Activated naive CD4-positive, alpha-beta T cell treated with anti-CD3 and anti-CD28 coated beads for 36 hours (primary cell): ENCODE measurements at regions of chr11 and their contacts with region 1.

Region 1: GRCh38 chr11:126282736-126283591 is at the start of gene TIRAP:
- DNase-seq: peak; percentile 70
- H3K4me3 Mint-ChIP-seq: peak within 1 kb of the TSS; percentile 95
- H3K27ac Mint-ChIP-seq: peak within 1 kb of the TSS; percentile 93
- H3K4me1 Mint-ChIP-seq: peaks cover 49% of the 10 kb centered on the region
- H3K27me3 Mint-ChIP-seq: no peaks in the 10 kb centered on the region
- total RNA-seq, gene TIRAP: 2.7 to 3.5 TPM

Region 2: GRCh38 chr11:126062679-126063506 is 220.1 kb before region 1 on chr11 and contains the start of gene CDON:
- CTCF ChIA-PET with region 1: no interaction called
- intact Hi-C with region 1: loop called (anchors 1 kb)
- DNase-seq: peak; percentile 92
- H3K4me3 Mint-ChIP-seq: peak within 1 kb of the TSS; percentile 77
- H3K27ac Mint-ChIP-seq: peak within 1 kb of the TSS; percentile 92
- H3K4me1 Mint-ChIP-seq: peaks cover 5% of the 10 kb centered on the region
- H3K27me3 Mint-ChIP-seq: peaks cover 17% of the 10 kb centered on the region
- total RNA-seq, gene CDON: 2.6 to 3.5 TPM

Region 3: GRCh38 chr11:126303623-126304456 is 20.9 kb after region 1 on chr11 and contains the start of gene DCPS:
- CTCF ChIA-PET with region 1: interaction called, 4 read pairs
- intact Hi-C with region 1: loop called (anchors 1 kb)
- DNase-seq: peak; percentile 86
- H3K4me3 Mint-ChIP-seq: peak within 1 kb of the TSS; percentile 95
- H3K27ac Mint-ChIP-seq: peak within 1 kb of the TSS; percentile 97
- H3K4me1 Mint-ChIP-seq: peaks cover 35% of the 10 kb centered on the region
- H3K27me3 Mint-ChIP-seq: no peaks in the 10 kb centered on the region
- total RNA-seq, gene DCPS: 34.9 to 39.5 TPM

Region 4: DNA sequence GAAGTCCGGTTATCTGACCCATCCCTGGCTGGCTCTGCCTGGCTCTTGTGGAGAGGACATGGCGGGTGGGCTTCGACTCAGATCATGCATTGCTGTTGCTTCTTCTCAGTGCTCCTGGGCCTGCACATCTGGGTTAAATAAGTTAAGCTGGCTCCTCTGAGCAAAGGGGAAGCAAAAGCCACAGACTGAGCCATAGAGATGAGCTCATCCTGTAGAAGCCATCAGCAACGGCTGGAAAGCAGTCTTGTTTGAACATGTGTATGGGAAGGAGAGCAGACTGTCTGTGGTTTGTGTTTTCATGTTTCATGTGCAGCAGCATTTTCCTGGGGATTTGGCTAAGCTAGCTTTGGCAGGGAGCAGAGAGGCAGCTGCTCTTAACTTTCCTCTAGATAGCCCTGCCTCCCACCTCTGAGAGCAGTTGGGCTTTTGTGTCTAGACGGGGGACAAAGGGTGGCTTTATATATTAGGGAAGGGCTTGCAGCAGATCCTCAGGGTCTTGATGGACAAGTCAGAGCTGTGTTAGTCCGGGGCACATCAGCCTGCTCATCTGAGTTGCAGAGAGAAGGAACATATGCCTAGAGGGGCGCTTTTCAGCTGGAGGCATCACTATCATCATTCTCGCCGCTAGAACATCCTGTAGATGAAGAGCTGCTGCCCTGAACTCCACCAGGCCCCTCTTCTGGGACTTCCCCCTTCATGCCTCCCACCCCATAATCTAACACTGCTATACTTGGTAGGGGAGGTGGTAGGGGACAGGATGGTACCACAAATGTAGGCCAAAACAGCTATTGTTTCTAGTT is 35.8 kb after region 1 on chr11:
- CTCF ChIA-PET with region 1: no interaction called
- intact Hi-C with region 1: loop called (anchors 1 kb)
- DNase-seq: peak; percentile 53
- H3K4me3 Mint-ChIP-seq: peak overlapping the region; percentile 44
- H3K27ac Mint-ChIP-seq: peak overlapping the region; percentile 43
- H3K4me1 Mint-ChIP-seq: peaks cover 32% of the 10 kb centered on the region
- H3K27me3 Mint-ChIP-seq: no peaks in the 10 kb centered on the region

Region 5: DNA sequence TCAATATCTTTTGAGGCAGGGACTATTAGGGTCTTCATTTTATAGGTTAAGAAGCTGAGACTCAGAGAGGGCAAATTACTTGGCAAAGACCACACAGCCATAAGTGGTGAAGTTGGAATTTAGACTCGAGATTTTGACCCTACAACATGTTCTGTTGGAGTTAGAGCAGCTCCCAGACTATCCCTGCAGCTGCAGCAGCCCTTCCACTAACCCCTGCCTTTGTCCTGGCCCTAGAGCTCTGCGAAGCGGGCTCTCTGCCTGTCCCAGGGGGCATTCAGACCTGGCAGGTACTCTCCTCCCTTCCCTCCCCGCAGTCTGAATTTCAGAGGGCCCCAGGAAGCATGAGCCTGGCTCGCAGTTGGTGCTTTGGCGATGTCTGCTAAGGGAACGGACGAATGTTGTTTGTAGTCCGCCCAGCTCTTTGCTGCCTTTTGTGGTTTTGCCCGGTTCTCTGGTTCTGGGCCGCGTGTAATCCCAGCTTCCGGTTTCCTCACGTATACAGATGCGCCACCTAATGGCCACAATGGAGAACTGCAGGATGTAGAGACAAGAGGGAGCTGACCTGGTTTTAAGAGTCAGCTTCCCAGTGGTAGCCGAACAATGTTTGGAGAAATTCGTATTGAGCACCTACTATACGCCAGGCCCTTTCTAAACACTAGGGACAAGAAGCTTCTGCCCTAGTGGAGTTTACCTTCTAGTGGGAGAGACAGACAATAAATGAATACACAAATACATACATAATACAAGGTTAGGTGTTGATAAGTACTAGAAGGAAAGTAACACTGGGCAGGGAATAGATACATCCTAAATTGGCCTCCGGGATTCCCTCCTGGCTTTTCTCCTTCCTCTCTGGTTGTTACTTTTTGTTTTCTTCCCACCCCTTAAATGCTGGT is 197.7 kb after region 1 on chr11:
- CTCF ChIA-PET with region 1: no interaction called
- intact Hi-C with region 1: loop called (anchors 1 kb)
- DNase-seq: peak; percentile 83
- H3K4me3 Mint-ChIP-seq: peak overlapping the region; percentile 51
- H3K27ac Mint-ChIP-seq: no peak overlapping the region
- H3K4me1 Mint-ChIP-seq: peaks cover 14% of the 10 kb centered on the region
- H3K27me3 Mint-ChIP-seq: no peaks in the 10 kb centered on the region

Region 6: GRCh38 chr11:126647735-126648134 is 364.8 kb after region 1 on chr11:
- CTCF ChIA-PET with region 1: no interaction called
- intact Hi-C with region 1: no loop called
- DNase-seq: no peak
- H3K4me3 Mint-ChIP-seq: no peak overlapping the region
- H3K27ac Mint-ChIP-seq: no peak overlapping the region
- H3K4me1 Mint-ChIP-seq: no peaks in the 10 kb centered on the region
- H3K27me3 Mint-ChIP-seq: peaks cover 5% of the 10 kb centered on the region